Stomach (tissue), 19 donors: ENCODE measurements at regions of chr17 and their contacts with region 1.

Region 1: GRCh38 chr17:57868007-57868909 is 18.4 kb upstream of the MRPS23 start:
- DNase-seq: peak; percentile 43 to 84
- H3K4me3 ChIP-seq: no peak overlapping the region
- H3K27ac ChIP-seq: peak overlapping the region; percentile 52 to 86 (median 84)
- H3K4me1 ChIP-seq: peaks cover 23 to 48% (median 34%) of the 10 kb centered on the region in 4 donors
- H3K27me3 ChIP-seq: no peaks in the 10 kb centered on the region
- CTCF ChIP-seq: peak in 3 of 7 experiments; percentile 16 to 29 (median 21)
- EP300 ChIP-seq: no peak
- POLR2A ChIP-seq: no peak

Region 2: GRCh38 chr17:58082870-58083490 is 214.7 kb after region 1 on chr17 and contains the start of gene DYNLL2:
- intact Hi-C with region 1: loop called (anchors 10 kb)
- DNase-seq: peak; percentile 94 to 97
- H3K4me3 ChIP-seq: peak within 1 kb of the TSS; percentile 79 to 99 (median 98)
- H3K27ac ChIP-seq: peak within 1 kb of the TSS; percentile 94 to 98 (median 97)
- H3K4me1 ChIP-seq: peaks cover 24 to 49% (median 46%) of the 10 kb centered on the region in 4 donors
- H3K27me3 ChIP-seq: no peaks in the 10 kb centered on the region
- CTCF ChIP-seq: no peak
- EP300 ChIP-seq: no peak
- POLR2A ChIP-seq: no peak
- total RNA-seq, gene DYNLL2: 5.8 to 40.6 (median 20.9) TPM